Mammary epithelial cell (primary cell): ENCODE measurements at regions of chr6 and their contacts with region 1.

Region 1: GRCh38 chr6:10722820-10723566 is at the start of gene TMEM14C:
- DNase-seq: peak; percentile 97
- H3K4me3 ChIP-seq: peak within 1 kb of the TSS; percentile 76 to 92 (median 81)
- H3K27ac ChIP-seq: peak within 1 kb of the TSS; percentile 91
- H3K4me1 ChIP-seq: peaks cover 27% of the 10 kb centered on the region
- H3K27me3 ChIP-seq: no peaks in the 10 kb centered on the region
- CTCF ChIP-seq: no peak
- total RNA-seq, gene TMEM14C: 90.0 to 113 TPM

Region 2: DNA sequence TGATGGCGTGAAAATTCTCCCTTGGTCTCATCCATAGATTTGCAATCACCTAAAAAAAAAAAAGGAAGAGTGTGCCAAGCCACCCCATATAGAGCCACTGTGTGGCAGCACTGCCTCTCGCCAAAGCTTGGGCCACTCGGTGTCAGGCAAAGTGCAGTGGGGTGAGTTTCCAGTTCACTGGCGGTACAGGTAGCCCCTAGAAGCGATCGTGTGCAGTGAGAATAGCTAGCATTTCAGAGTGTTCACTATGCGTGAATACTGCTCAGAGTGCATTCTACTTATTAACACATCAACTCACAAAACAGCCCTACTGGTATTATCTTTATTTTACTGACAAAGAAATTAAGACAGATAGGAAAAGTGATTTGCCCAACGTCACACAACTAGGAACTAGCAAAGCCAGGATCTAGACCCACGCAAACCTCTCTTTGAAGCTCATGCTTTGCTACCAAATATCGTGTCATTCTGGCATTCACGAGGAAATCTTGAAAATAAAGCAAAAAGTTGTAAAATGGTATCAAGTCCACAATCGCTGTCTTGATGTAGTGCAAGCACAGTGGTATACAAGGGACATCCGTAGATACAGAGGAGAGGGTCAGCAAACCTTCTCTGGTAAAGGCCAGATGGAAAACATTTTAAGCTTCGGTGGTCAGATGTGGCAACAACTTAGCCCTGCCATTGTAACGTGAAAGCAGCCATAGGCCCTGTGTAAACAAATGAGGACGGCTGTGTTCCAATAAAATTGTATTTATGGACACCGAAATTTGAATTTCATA is 212.2 kb before region 1 on chr6:
- CTCF ChIA-PET with region 1: no interaction called
- dilution Hi-C with region 1: no loop called
- in situ Hi-C with region 1: no loop called
- intact Hi-C with region 1: loop called (anchors 1 kb)
- DNase-seq: peak; percentile 27
- H3K4me3 ChIP-seq: no peak overlapping the region
- H3K27ac ChIP-seq: no peak overlapping the region
- H3K4me1 ChIP-seq: no peaks in the 10 kb centered on the region
- H3K27me3 ChIP-seq: no peaks in the 10 kb centered on the region
- CTCF ChIP-seq: peak; percentile 84 to 86

Region 3: DNA sequence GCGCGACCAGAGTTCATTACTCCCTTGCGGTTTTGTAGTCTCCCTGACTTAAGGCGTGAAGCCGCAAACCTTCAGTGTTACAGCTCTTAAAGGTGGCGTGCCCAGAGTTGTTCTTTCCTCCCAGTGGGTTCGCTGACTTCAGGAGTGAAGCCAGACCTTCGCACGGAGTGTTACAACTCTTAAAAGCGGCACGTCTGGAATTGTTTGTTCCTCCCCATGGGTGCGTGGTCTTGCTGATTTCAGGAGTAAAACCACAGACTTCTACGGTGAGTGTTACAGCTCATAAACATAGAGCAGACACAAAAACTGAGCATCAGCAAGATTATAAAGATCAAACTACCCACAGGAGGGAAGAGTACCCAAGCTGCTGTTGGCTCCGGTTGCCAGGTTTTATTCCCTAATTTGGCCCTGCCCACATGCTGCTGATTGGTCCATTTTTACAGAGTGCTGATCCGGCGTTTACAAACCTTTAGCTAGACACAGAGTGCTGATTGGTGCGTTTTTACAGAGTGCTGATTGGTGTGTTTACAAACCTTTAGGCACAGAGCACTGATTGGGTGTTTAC is 10.2 kb after region 1 on chr6:
- CTCF ChIA-PET with region 1: interaction called, 3 read pairs
- dilution Hi-C with region 1: no loop called
- in situ Hi-C with region 1: no loop called
- intact Hi-C with region 1: loop called (anchors 1 kb)
- DNase-seq: no peak
- H3K4me3 ChIP-seq: no peak overlapping the region
- H3K27ac ChIP-seq: no peak overlapping the region
- H3K4me1 ChIP-seq: peaks cover 8% of the 10 kb centered on the region
- H3K27me3 ChIP-seq: no peaks in the 10 kb centered on the region
- CTCF ChIP-seq: no peak

Region 4: GRCh38 chr6:10747251-10747972 is 24.4 kb after region 1 on chr6 and contains the start of gene TMEM14B:
- CTCF ChIA-PET with region 1: no interaction called
- dilution Hi-C with region 1: no loop called
- in situ Hi-C with region 1: no loop called
- intact Hi-C with region 1: loop called (anchors 1 kb)
- DNase-seq: peak; percentile 95
- H3K4me3 ChIP-seq: peak within 1 kb of the TSS; percentile 82 to 99 (median 84)
- H3K27ac ChIP-seq: peak within 1 kb of the TSS; percentile 86
- H3K4me1 ChIP-seq: peaks cover 14% of the 10 kb centered on the region
- H3K27me3 ChIP-seq: no peaks in the 10 kb centered on the region
- CTCF ChIP-seq: no peak
- total RNA-seq, gene TMEM14B: 39.3 to 63.5 TPM

Region 5: DNA sequence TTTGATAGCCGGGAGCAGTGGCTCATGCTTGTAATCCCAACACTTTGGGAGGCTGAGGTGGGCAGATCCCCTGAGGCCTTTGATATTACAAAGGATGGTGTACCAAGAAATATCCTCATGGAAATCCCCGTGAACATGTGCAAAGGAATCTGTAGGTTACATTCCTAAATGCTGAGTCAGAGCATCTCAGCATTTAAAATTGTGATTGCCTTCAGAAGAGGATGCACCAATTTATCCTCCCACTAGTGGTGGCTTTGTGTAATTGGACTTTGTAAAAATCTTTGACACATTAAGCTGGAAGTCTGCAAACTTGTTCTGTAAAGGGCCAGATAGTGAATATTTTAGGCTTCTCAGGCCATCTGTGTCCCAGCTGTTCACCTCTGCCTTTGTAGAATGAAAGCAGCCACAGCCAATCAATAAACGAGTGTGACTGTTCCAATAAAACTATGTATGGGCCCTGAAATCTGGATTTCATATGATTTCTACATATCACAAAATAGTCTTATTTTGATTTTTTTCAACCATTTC is 36.4 kb after region 1 on chr6:
- CTCF ChIA-PET with region 1: interaction called, 3 read pairs
- dilution Hi-C with region 1: no loop called
- in situ Hi-C with region 1: no loop called
- intact Hi-C with region 1: loop called (anchors 1 kb)
- DNase-seq: peak; percentile 96
- H3K4me3 ChIP-seq: no peak overlapping the region
- H3K27ac ChIP-seq: peak overlapping the region; percentile 84
- H3K4me1 ChIP-seq: peaks cover 21% of the 10 kb centered on the region
- H3K27me3 ChIP-seq: no peaks in the 10 kb centered on the region
- CTCF ChIP-seq: peak; percentile 58 to 67

Region 6: GRCh38 chr6:10771371-10771894 is 48.4 kb after region 1 on chr6:
- CTCF ChIA-PET with region 1: no interaction called
- dilution Hi-C with region 1: no loop called
- in situ Hi-C with region 1: no loop called
- intact Hi-C with region 1: no loop called
- DNase-seq: no peak
- H3K4me3 ChIP-seq: no peak overlapping the region
- H3K27ac ChIP-seq: no peak overlapping the region
- H3K4me1 ChIP-seq: no peaks in the 10 kb centered on the region
- H3K27me3 ChIP-seq: no peaks in the 10 kb centered on the region
- CTCF ChIP-seq: no peak

Region 7: GRCh38 chr6:10809098-10809497 is 86.1 kb after region 1 on chr6:
- CTCF ChIA-PET with region 1: no interaction called
- dilution Hi-C with region 1: no loop called
- in situ Hi-C with region 1: no loop called
- intact Hi-C with region 1: no loop called
- DNase-seq: no peak
- H3K4me3 ChIP-seq: no peak overlapping the region
- H3K27ac ChIP-seq: no peak overlapping the region
- H3K4me1 ChIP-seq: no peaks in the 10 kb centered on the region
- H3K27me3 ChIP-seq: no peaks in the 10 kb centered on the region
- CTCF ChIP-seq: no peak